ENCODE measurements at regions of chr2 and their contacts with region 1.

Region 1: GRCh38 chr2:130391058-130391871 is 35.4 kb downstream of the PTPN18 start:
- DNase-seq: peak; percentile 64
- ATAC-seq: peak; percentile 90
- H3K4me3 Mint-ChIP-seq: peak overlapping the region; percentile 91
- H3K27ac Mint-ChIP-seq: peak overlapping the region; percentile 87
- H3K4me1 Mint-ChIP-seq: peaks cover 58% of the 10 kb centered on the region
- H3K27me3 Mint-ChIP-seq: no peaks in the 10 kb centered on the region
- CTCF ChIP-seq: no peak

Region 2: DNA sequence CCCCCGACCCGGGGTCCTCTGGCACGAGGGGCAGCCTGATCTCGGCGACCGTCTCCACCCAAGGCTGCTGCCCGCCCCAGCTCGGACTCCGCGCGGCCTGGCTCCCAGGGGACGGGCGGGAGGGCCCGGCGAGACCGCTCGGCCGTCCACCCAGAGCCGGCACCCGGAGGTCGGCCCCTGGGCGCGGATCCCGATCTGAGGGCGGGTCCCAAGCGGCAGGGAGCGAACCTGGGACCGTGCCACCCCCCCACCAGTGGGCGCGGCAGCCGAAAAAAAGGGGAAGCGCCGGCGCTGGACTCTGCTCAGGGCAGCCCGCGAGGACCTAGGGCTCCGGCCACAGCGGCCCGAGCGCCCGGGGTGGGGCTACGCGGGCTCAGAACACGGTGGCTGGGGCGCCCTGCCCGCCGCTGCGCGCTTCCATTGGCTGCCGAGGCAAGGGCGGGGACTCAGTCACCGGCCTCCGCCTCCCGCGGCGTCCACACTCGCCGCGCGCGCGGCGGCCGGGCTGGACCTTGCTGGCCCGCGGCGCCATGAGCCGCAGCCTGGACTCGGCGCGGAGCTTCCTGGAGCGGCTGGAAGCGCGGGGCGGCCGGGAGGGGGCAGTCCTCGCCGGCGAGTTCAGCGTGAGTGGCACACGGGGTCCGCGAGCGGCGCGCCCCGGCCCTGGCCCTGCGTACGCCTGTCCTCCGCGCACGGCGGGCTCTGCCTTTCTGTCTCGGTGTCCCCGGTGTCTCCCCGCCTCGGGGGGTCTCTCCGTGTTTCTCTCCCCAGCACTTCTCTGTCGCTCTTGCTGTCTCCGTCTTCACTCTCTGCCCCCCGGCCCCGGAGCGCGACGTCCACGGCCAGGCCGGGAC is 35.5 kb before region 1 on chr2 and contains the start of gene PTPN18:
- CTCF ChIA-PET with region 1: no interaction called
- POLR2A ChIA-PET with region 1: no interaction called
- intact Hi-C with region 1: loop called (anchors 1 kb)
- DNase-seq: peak; percentile 59
- ATAC-seq: peak; percentile 96
- H3K4me3 Mint-ChIP-seq: peak within 1 kb of the TSS; percentile 83
- H3K27ac Mint-ChIP-seq: no peak within 1 kb of the TSS
- H3K4me1 Mint-ChIP-seq: peaks cover 31% of the 10 kb centered on the region
- H3K27me3 Mint-ChIP-seq: no peaks in the 10 kb centered on the region
- CTCF ChIP-seq: no peak
- total RNA-seq, gene PTPN18: 77.7 and 79.2 TPM in 2 replicates